Cardiac septum (tissue), 1 donor: ENCODE measurements at regions of chr17 and their contacts with region 1.

Region 1: DNA sequence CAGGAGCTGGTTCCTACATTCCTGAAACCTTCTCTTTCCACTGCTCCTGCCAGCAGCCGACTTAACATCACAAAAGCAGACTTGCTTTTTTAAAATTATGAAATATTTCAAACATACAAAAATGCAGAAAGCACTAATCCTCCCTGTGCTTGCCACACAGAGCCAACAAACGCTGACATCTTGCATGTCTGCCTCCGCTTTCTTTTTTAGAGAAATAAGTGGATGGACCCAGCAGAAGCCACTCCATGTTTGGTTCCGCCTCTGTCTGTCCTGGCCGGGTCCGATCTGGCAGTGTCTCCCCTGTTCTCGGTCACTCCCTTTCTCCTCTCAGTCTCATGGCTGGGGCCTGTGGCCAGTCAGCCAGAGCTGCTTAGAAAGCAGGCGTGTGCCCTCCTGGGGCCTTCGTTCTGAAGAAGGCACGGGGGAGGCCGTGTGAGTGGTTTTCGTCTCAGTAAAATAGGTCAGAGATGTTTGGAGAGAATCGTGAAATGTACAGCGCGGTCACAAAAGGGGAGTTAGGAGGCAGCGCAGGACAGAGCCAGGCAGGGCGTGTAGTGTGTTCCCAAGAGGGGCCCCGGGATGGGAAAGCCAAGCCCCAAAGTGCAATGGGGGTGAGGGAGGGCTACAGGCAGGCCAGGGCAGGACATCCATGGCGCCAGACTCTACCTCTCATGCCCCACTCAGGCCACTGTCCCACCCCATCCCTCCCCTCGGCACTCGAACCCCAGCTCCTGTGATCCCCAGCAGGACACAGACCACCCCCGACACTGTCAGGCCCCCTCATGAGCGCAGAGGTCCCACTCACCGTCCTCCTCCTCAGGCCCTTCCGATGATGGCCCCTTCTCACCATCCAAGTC is 23.2 kb downstream of the MXRA7 start:
- DNase-seq: peak; percentile 81

Region 2: GRCh38 chr17:76700617-76701470 is 13.3 kb after region 1 on chr17:
- intact Hi-C with region 1: loop called (anchors 1 kb)
- DNase-seq: no peak

Region 3: DNA sequence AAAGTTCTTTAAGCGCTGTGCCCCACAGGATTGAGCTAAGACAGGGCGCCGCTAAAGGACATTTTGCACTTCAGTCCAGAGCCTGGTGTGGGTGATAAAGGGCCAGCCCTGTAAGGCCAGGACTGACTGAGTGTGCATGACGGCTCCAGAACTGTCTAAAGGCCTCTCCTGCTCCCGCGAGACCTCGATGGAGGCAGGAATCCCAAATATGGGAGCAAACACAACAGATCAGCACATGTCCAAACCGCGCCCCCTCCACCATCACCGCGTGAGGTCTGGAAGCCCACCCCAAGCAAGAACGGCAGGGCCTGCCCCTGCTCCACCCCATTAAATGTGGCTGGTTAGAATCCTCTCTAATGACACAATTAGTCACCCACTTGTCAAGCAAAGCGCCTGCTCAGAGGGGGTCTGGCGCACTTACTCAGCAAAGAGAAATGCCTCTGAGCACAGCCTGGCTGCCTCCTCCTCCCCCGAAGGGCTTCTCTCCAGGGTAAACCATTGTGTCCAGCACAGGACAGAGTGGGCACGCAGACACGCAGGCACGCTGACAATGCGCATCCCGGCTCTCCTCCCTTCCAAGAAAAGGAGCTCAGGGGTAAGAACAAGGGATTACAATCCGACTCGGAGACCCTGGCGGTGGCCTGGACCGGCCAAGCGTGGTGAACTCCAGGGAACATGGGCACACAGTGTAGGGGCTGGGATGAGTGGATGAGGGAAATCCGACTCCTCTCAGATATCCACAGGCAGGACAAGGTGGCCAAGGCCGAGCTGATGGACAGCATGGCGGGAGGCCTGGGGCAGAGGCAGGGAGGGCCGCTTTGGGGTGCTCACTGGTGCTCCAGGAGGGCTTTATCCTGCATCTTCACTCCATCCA is 21.8 kb after region 1 on chr17:
- intact Hi-C with region 1: loop called (anchors 2 kb)
- DNase-seq: peak; percentile 92

Region 4: DNA sequence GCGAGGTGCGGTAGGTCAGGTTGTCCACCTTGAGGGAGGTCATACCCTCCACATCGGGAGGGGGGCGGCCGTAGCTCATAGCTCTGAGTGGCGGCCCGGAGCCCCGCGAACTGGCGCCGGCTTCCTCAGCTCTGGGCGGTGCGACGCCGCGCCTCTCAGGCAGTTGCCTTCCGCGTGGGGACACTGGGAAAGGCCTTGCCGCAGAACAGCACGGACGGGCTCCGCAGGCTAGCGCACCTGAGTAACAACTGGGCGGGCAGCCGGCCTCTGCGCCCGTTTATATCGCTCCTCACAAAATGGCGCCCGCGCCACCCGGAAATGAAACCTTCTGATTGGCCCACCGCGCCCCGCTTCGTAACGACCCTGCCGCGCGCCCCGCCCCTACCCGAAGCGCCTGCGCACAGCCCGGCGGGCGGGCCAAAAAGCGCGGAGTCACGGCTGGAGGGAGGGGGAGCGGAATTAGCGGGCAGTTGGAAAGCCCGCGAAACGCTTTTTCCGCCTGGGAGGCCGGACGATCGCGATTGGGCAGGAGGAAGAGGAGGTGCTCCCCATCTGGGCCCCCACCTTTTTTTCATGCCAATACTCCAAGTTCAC is 49.6 kb after region 1 on chr17 and contains the start of gene SRSF2:
- intact Hi-C with region 1: no loop called
- DNase-seq: peak; percentile 99
- total RNA-seq, gene SRSF2: 98.0 TPM